Activated B cell treated with CpG ODN at 0.5 μM for 24 hours (primary cell): ENCODE measurements at regions of chr16 and their contacts with region 1.

Region 1: DNA sequence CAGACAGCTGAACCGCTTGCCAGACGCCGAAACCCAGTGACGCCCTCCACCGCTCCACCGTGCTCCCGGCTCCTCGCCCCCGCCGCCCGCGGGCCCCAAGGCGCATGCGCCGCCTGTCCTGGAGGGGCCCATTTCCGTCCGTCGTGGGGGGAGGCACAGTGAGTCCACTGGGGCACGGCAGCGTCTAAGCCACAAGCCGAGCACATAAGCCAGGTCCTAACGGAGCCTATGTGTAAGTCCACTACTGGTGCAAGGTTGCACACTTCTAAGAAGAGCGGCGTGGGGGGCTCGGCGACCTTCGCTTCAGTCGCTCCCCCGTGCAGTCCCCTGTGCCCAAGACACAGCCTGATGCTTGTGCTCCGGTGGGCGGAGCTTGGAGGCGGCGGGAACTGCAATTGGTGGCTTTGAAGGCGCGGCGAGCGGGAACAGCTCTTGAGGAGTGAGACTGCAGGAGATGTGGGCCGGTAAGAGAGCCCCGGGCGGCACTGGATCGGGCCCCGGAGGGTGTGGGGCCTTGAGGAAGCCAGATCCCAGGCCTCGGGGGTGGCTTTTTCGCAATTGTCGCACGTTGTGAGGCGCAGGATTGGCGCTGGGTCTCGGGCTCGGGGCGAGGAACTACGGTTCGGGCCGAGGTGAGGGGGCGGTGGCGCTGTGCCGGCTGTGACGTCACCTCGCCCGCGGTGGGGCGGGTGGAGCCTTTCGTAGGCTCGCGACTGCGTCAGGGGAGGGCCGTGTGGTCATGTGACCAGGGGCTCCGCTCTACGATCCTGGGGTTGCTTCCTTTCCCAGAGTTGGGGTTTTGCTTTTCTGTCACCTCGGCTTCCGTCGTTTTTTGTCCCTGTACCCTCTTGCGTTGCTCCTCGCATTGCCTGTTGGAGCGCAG is at the starts of genes CENPN and CMC2:
- DNase-seq: peak; percentile 98
- ATAC-seq: peak; percentile 84
- H3K4me3 Mint-ChIP-seq: peak within 1 kb of the TSS; percentile 94
- H3K27ac Mint-ChIP-seq: peak within 1 kb of the TSS; percentile 100
- H3K4me1 Mint-ChIP-seq: peaks cover 42% of the 10 kb centered on the region
- H3K27me3 Mint-ChIP-seq: no peaks in the 10 kb centered on the region
- CTCF ChIP-seq: no peak
- total RNA-seq, gene CENPN: 5.4 and 5.9 TPM in 2 replicates
- total RNA-seq, gene CMC2: 18.1 and 22.3 TPM in 2 replicates

Region 2: DNA sequence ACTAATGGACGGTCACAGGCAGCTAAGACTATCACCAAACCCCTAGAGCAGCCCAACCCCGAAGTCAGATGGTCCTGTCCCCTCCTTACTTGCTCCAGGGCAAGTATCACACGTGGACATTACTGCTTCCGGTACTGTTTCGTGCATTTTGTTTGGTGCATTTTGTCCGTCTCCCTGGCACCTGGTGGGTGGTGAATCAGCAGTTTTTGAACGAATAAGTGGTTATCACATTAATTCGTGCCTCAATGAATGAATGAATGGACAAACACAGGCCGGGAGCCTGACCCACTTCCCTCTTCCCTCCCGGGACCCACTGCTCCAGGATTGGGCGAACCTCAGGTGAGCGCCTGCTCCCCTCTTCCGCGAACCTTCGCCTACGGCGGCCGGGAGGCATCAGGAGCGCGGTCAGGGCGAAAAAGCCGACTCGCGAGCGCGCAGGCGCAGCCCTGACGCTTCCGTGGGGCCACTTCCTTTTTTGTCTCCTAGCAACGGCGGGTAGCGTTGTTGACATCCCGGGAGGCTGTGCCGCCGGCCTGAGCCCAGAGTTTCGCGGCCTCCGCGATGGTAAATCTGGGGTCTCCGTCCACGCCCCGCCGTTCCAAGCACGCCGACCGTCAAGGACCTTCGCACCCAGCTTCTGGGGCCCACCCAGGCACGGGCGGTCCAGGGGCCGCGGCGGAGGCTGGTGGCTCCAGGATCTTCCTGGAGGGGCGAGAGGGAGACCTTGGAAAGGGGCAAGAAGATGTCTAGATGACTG is 466.4 kb before region 1 on chr16 and contains the start of gene DYNLRB2:
- CTCF ChIA-PET with region 1: no interaction called
- POLR2A ChIA-PET with region 1: no interaction called
- intact Hi-C with region 1: loop called (anchors 1 kb)
- DNase-seq: peak; percentile 90
- ATAC-seq: peak; percentile 92
- H3K4me3 Mint-ChIP-seq: peak within 1 kb of the TSS; percentile 96
- H3K27ac Mint-ChIP-seq: peak within 1 kb of the TSS; percentile 96
- H3K4me1 Mint-ChIP-seq: peaks cover 16% of the 10 kb centered on the region
- H3K27me3 Mint-ChIP-seq: peaks cover 7% of the 10 kb centered on the region
- CTCF ChIP-seq: no peak
- total RNA-seq, gene DYNLRB2: 0.71 TPM in 1 of 2 replicates, not detected in the other

Region 3: DNA sequence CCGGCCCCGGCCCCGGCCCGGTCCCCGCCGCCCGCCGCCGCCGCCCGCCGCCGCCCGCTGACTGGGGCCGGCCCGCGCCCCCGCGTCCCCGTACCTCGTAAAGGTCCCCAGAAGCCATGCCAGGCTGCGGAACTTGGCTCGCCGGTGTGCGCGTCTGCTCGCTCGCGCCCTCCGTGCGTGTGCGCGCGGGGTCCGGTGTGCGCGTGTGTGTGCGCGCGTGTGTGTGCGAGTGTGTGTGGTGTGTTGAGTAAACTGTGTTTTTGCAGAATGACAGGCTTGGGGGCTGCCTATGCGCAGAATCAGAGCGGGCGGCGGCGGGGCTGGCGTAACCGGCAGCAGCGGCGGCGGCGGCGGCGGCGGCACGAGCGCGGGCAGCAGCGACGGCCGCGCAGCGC is 203.0 kb before region 1 on chr16:
- CTCF ChIA-PET with region 1: no interaction called
- POLR2A ChIA-PET with region 1: no interaction called
- intact Hi-C with region 1: loop called (anchors 10 kb)
- DNase-seq: peak; percentile 42
- ATAC-seq: peak; percentile 54
- H3K4me3 Mint-ChIP-seq: peak overlapping the region; percentile 92
- H3K27ac Mint-ChIP-seq: no peak overlapping the region
- H3K4me1 Mint-ChIP-seq: peaks cover 4% of the 10 kb centered on the region
- H3K27me3 Mint-ChIP-seq: peaks cover 5% of the 10 kb centered on the region
- CTCF ChIP-seq: no peak

Region 4: DNA sequence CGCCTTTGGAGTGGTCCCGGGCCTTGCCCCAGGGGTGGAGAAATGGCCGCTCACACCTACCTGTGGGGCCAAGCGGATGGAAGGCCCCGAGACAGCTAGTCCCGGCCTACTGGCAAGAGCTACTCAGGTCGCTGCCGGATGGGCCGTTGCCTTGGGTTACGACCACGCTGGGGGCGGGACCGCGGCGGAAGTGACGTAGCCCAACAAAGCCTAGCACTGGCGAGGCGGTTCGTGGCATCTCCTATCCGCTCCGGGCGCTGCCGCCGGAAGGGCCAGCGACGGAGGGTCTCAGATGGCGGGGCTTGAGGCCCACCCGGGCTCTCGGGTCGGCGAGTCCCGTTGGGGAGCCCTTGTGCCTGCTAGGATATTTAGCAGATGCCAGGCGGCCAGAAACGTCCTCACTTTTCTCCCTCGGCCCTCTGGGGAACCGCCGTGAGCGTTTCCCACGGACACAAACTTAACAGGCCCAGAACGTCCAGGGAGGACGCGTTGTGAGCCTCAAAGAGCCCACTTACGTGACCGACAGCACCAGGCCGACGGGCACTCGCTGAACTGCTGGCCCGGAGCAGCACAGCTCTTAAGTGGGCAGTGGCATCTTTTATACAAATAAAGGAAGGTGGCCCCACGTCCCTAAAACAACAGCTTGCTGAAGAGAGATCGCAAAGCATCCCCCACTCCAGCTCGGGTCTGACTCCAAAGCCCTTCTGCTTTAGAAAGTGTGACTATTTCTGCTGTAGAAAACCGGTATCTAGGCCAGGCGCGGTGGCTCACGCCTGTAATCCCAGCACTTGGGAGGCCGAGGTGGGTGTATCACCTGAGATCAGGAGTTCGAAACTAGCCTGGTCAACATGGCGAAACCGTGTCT is 70.3 kb after region 1 on chr16 and contains the start of gene C16orf46:
- CTCF ChIA-PET with region 1: interaction called, 3 read pairs
- POLR2A ChIA-PET with region 1: interaction called, 24 read pairs
- intact Hi-C with region 1: loop called (anchors 1 kb)
- DNase-seq: peak; percentile 99
- ATAC-seq: peak; percentile 77
- H3K4me3 Mint-ChIP-seq: peak within 1 kb of the TSS; percentile 28
- H3K27ac Mint-ChIP-seq: no peak within 1 kb of the TSS
- H3K4me1 Mint-ChIP-seq: peaks cover 3% of the 10 kb centered on the region
- H3K27me3 Mint-ChIP-seq: no peaks in the 10 kb centered on the region
- CTCF ChIP-seq: no peak
- total RNA-seq, gene C16orf46: 0.61 and 0.75 TPM in 2 replicates

Region 5: GRCh38 chr16:81314603-81315270 is 307.7 kb after region 1 on chr16 and contains the start of gene GAN:
- CTCF ChIA-PET with region 1: interaction called, 3 read pairs
- POLR2A ChIA-PET with region 1: interaction called, 3 read pairs
- intact Hi-C with region 1: loop called (anchors 2 kb)
- DNase-seq: peak; percentile 89
- ATAC-seq: peak; percentile 95
- H3K4me3 Mint-ChIP-seq: peak within 1 kb of the TSS; percentile 96
- H3K27ac Mint-ChIP-seq: peak within 1 kb of the TSS; percentile 91
- H3K4me1 Mint-ChIP-seq: peaks cover 29% of the 10 kb centered on the region
- H3K27me3 Mint-ChIP-seq: no peaks in the 10 kb centered on the region
- CTCF ChIP-seq: no peak
- total RNA-seq, gene GAN: 5.1 and 8.6 TPM in 2 replicates

Region 6: GRCh38 chr16:81831722-81832126 is 824.7 kb after region 1 on chr16:
- CTCF ChIA-PET with region 1: no interaction called
- POLR2A ChIA-PET with region 1: no interaction called
- intact Hi-C with region 1: loop called (anchors 10 kb)
- DNase-seq: peak; percentile 69
- ATAC-seq: peak; percentile 69
- H3K4me3 Mint-ChIP-seq: peak overlapping the region; percentile 77
- H3K27ac Mint-ChIP-seq: peak overlapping the region; percentile 97
- H3K4me1 Mint-ChIP-seq: peaks cover 96% of the 10 kb centered on the region
- H3K27me3 Mint-ChIP-seq: no peaks in the 10 kb centered on the region
- CTCF ChIP-seq: no peak

Region 7: GRCh38 chr16:82169861-82170845 is 1163.1 kb after region 1 on chr16 and contains the start of gene MPHOSPH6:
- CTCF ChIA-PET with region 1: no interaction called
- POLR2A ChIA-PET with region 1: no interaction called
- intact Hi-C with region 1: loop called (anchors 1 kb)
- DNase-seq: peak; percentile 88
- ATAC-seq: peak; percentile 95
- H3K4me3 Mint-ChIP-seq: peak within 1 kb of the TSS; percentile 96
- H3K27ac Mint-ChIP-seq: peak within 1 kb of the TSS; percentile 91
- H3K4me1 Mint-ChIP-seq: peaks cover 19% of the 10 kb centered on the region
- H3K27me3 Mint-ChIP-seq: peaks cover 14% of the 10 kb centered on the region
- CTCF ChIP-seq: no peak
- total RNA-seq, gene MPHOSPH6: 22.2 and 31.6 TPM in 2 replicates